GM10248 (cell line): ENCODE measurements at regions of chr20 and their contacts with region 1.

Region 1: GRCh38 chr20:38674092-38674764 is 50.1 kb upstream of the SLC32A1 start:
- DNase-seq: peak; percentile 87
- CTCF ChIP-seq: no peak

Region 2: DNA sequence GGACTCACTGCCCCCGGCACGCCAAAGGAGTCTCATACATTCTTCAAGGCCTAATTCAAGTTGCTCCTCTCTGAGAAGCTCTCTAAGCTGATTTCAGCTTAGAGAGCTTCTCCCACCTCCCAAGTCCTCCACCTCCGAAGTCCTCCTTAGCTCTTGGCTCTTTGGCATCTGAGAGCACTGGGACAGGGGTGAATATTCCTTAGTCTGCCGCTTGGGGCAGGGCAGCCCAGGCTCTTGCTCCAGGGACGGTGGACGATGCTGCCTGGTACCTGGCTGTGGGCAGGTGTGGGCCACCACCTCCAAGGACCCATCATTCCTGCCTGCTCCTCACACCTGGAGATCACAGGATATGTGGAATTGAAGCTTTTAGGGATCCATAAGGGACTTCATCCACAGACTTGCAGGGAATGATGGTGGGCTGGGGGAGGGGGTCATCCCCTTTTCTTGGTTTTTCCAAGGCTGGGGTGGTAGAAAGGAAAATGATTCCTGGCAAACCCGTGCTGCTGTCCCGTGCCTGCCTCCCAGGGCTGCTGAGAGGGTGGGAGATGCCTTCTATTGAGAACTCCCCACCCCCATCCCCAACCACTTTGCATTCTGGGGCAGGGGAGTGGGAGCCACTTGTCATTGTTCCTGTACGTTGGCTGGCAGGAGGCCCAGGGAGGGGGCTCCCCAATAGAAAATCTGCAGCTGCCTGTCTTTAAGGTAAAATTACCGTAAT is 15.2 kb before region 1 on chr20:
- CTCF ChIA-PET with region 1: interaction called, 31 read pairs
- POLR2A ChIA-PET with region 1: no interaction called
- DNase-seq: peak; percentile 63
- CTCF ChIP-seq: peak; percentile 56